Naive thymus-derived CD4-positive, alpha-beta T cell (primary cell): ENCODE measurements at regions of chr1 and their contacts with region 1.

Region 1: DNA sequence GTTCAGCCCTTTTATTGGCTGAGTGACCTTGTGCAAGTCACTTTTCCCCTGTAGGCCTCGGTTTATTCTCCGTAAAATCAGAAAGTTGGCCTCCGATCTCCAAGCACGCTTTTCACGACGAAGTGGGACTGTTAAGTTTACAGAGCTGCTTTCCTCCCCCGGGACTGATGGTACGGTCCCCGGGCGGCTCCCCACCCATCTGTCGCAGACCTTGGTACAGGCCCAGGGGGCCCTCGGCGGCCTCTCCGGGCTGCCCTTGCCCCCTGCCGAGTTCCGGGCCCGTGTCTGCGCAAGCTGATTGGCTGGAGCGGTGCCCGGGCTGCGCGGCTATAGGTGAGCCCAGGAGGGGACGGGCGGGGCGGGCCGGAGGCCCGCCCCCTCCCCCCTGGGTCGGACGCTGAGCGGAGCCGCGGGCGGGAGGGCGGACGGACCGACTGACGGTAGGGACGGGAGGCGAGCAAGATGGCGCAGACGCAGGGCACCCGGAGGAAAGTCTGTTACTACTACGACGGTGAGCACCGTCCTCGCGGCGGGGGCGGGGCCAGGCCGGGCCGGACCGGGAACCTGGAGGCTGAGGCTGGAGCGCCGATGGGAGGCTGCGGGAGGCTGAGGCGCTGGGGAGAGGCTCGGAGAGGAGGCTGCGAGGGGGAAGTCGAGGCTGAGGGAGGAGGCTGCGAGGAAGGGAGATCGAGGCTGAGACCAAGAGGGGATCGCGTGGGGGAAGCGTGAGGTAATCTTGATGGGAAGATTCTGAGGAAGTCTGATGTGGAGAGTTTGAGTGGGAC is at the start of gene HDAC1:
- DNase-seq: peak; percentile 91 to 97 (median 94)
- ATAC-seq: peak; percentile 98
- H3K4me3 ChIP-seq: peak within 1 kb of the TSS; percentile 92
- H3K4me3 Mint-ChIP-seq: peak within 1 kb of the TSS; percentile 94 to 100 (median 98)
- H3K27ac ChIP-seq: peak within 1 kb of the TSS; percentile 88
- H3K27ac Mint-ChIP-seq: peak within 1 kb of the TSS; percentile 94 to 99 (median 98)
- H3K4me1 ChIP-seq: peaks cover 38 to 46% of the 10 kb centered on the region in 2 donors
- H3K4me1 Mint-ChIP-seq: peaks cover 37 to 67% (median 48%) of the 10 kb centered on the region in 7 donors
- H3K27me3 ChIP-seq: no peaks in the 10 kb centered on the region
- H3K27me3 Mint-ChIP-seq: no peaks in the 10 kb centered on the region
- total RNA-seq, gene HDAC1: 81.8 to 205 (median 174) TPM

Region 2: DNA sequence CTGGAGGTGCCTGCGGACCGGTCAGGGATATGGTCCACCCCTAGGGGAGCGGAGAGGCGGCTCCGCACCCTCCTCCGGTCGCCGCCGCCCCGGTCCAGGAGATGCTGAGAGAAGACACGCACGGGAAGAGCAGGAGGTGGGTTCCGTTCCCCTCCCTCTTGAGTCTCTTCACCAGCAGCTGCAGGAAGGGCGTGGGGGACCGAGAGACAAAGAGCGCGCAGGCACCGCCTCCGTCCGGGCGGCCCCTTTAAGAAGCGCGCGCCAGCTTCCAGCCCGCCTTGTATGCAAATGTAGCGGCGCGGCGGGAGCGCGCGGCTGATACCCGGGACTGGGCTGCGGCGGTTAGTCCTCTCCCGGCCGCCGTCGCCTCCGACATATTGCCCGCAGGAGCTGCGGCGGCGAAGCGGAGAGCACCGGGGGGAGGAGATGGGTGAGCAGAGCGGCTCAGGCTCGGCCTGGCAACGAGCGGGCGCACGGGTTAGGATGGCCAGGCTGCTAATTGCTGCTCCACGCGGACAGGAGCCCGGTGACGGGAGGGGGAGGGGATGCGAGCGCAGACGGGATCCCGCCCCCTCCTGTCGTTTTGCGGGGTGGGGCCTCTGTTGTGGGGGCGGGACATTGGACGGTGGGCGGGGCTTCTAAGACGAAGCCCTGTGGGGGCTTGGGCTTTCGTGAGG is 219.1 kb before region 1 on chr1 and contains the start of gene TMEM39B:
- CTCF ChIA-PET with region 1: no interaction called
- POLR2A ChIA-PET with region 1: interaction called, 4 read pairs
- intact Hi-C with region 1: loop called in 1 of 2 experiments (anchors 2 kb)
- DNase-seq: peak; percentile 90 to 97 (median 96)
- ATAC-seq: peak; percentile 92
- H3K4me3 ChIP-seq: peak within 1 kb of the TSS; percentile 98
- H3K4me3 Mint-ChIP-seq: peak within 1 kb of the TSS; percentile 83 to 94 (median 91)
- H3K27ac ChIP-seq: peak within 1 kb of the TSS; percentile 82
- H3K27ac Mint-ChIP-seq: peak within 1 kb of the TSS; percentile 84 to 95 (median 92)
- H3K4me1 ChIP-seq: peaks cover 5 to 16% of the 10 kb centered on the region in 2 donors
- H3K4me1 Mint-ChIP-seq: peaks cover 21 to 58% (median 47%) of the 10 kb centered on the region in 7 donors
- H3K27me3 ChIP-seq: no peaks in the 10 kb centered on the region
- H3K27me3 Mint-ChIP-seq: no peaks in the 10 kb centered on the region
- total RNA-seq, gene TMEM39B: 11.4 to 35.9 (median 26.4) TPM

Region 3: DNA sequence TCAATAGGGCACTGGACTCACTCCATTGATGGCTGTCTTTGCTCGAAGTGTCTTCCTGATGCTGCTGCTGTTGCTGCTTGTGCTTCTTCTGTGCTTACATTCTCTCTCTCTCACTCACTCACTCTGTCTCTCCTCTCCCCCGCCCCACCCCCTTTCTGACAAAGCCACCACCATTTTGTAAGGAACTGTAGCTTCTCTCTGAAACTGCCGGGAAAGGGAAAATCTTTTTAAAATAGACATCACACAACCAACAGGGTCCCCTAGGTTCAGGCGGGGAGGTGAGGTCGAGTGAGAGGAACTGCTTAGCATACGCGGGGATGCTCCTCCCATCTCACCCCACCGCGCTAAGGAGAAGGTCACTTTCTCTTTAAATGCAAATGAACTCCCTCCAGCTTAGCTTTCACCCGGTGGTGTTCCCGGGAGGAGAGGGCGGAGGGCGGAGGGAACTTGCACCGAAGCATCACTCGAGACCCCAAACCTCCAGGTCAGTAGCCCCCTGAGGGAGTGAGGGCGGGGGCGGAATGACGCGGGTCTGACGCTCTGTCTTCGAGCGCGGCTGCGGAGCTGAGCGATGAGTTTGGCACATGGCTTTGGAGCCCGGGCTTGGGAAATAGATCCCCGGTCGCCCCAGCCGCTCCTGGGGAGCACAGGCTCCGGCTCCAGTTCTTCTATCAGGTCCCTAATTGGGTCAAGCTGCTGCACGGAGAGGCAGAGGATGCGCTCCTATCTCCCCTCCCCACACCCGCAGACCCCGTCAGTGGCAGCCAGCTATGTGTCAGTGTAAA is 91.5 kb before region 1 on chr1 and contains the start of gene CCDC28B:
- CTCF ChIA-PET with region 1: no interaction called
- POLR2A ChIA-PET with region 1: interaction called, 6 read pairs
- intact Hi-C with region 1: loop called (anchors 1 kb)
- DNase-seq: peak; percentile 35 to 71 (median 62)
- ATAC-seq: peak; percentile 59
- H3K4me3 ChIP-seq: peak within 1 kb of the TSS; percentile 96
- H3K4me3 Mint-ChIP-seq: peak within 1 kb of the TSS; percentile 78 to 99 (median 94)
- H3K27ac ChIP-seq: peak within 1 kb of the TSS; percentile 99
- H3K27ac Mint-ChIP-seq: peak within 1 kb of the TSS; percentile 72 to 98 (median 91)
- H3K4me1 ChIP-seq: peaks cover 32 to 35% of the 10 kb centered on the region in 2 donors
- H3K4me1 Mint-ChIP-seq: peaks cover 41 to 73% (median 60%) of the 10 kb centered on the region in 7 donors
- H3K27me3 ChIP-seq: no peaks in the 10 kb centered on the region
- H3K27me3 Mint-ChIP-seq: no peaks in the 10 kb centered on the region
- total RNA-seq, gene CCDC28B: 6.2 to 39.0 (median 8.7) TPM

Region 4: GRCh38 chr1:32240140-32240951 is 51.6 kb before region 1 on chr1:
- CTCF ChIA-PET with region 1: interaction called, 23 read pairs
- POLR2A ChIA-PET with region 1: interaction called, 155 read pairs
- intact Hi-C with region 1: loop called in 1 of 2 experiments (anchors 1 kb)
- DNase-seq: peak in 7 of 9 donors; percentile 33 to 73 (median 57)
- ATAC-seq: peak; percentile 78
- H3K4me3 ChIP-seq: peak overlapping the region; percentile 94
- H3K4me3 Mint-ChIP-seq: peak overlapping the region; percentile 87 to 93 (median 91)
- H3K27ac ChIP-seq: peak overlapping the region; percentile 68
- H3K27ac Mint-ChIP-seq: peak overlapping the region in 8 of 9 donors; percentile 40 to 92 (median 83)
- H3K4me1 ChIP-seq: peaks cover 8 to 17% of the 10 kb centered on the region in 2 donors
- H3K4me1 Mint-ChIP-seq: peaks cover 6 to 31% (median 22%) of the 10 kb centered on the region in 7 donors
- H3K27me3 ChIP-seq: no peaks in the 10 kb centered on the region
- H3K27me3 Mint-ChIP-seq: no peaks in the 10 kb centered on the region

Region 5: GRCh38 chr1:32273388-32274208 is 18.3 kb before region 1 on chr1:
- CTCF ChIA-PET with region 1: interaction called, 3 read pairs
- POLR2A ChIA-PET with region 1: interaction called, 29 read pairs
- intact Hi-C with region 1: loop called (anchors 1 kb)
- DNase-seq: peak; percentile 34 to 96 (median 88)
- ATAC-seq: peak; percentile 94
- H3K4me3 ChIP-seq: peak overlapping the region; percentile 49
- H3K4me3 Mint-ChIP-seq: peak overlapping the region; percentile 74 to 91 (median 88)
- H3K27ac ChIP-seq: peak overlapping the region; percentile 79
- H3K27ac Mint-ChIP-seq: peak overlapping the region; percentile 77 to 99 (median 97)
- H3K4me1 ChIP-seq: peaks cover 42 to 69% of the 10 kb centered on the region in 2 donors
- H3K4me1 Mint-ChIP-seq: peaks cover 45 to 86% (median 62%) of the 10 kb centered on the region in 7 donors
- H3K27me3 ChIP-seq: no peaks in the 10 kb centered on the region
- H3K27me3 Mint-ChIP-seq: no peaks in the 10 kb centered on the region

Region 6: DNA sequence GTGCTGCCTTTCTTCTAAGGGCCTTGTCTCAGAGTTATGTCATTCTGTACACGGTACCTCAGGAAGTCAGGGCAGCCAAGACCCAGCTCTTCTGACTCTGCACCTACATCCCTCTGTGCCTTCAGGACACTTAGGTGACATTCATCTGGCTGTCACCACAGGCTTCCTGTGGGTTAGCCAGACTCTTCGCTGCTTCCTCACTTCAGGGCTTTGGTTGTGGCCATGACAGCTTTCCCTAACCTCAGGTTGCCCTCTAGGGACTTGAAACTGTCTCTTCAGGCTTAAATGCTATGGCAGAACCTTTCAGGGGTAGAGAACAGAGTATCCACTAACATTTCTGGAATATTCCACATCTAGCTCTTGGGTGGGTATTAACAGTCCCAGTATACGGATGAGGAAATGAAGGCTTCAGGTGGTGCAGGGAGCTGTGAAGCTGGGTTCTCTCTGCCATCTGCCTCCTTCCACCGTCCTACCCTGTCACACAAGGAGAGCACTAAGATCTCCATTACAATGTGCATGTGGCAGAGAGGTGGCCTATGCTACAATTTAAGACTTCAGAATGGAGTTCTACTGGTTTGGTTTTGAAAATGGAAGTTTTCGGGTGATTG is 80.4 kb after region 1 on chr1:
- CTCF ChIA-PET with region 1: interaction called, 5 read pairs
- POLR2A ChIA-PET with region 1: interaction called, 3 read pairs
- intact Hi-C with region 1: loop called in 1 of 2 experiments (anchors 1 kb)
- DNase-seq: peak; percentile 22 to 78 (median 68)
- ATAC-seq: peak; percentile 88
- H3K4me3 ChIP-seq: no peak overlapping the region
- H3K4me3 Mint-ChIP-seq: peak overlapping the region in 2 of 10 donors; percentile 6 to 9
- H3K27ac ChIP-seq: peak overlapping the region; percentile 20
- H3K27ac Mint-ChIP-seq: peak overlapping the region in 7 of 9 donors; percentile 1 to 75 (median 57)
- H3K4me1 ChIP-seq: peaks cover 12% of the 10 kb centered on the region in 2 donors
- H3K4me1 Mint-ChIP-seq: peaks cover 15 to 22% (median 20%) of the 10 kb centered on the region in 7 donors
- H3K27me3 ChIP-seq: no peaks in the 10 kb centered on the region
- H3K27me3 Mint-ChIP-seq: no peaks in the 10 kb centered on the region